SK-N-SH (cell line): ENCODE measurements at regions of chr10 and their contacts with region 1.

Region 1: GRCh38 chr10:61896854-61897661 is 4.4 kb upstream of the ARID5B start:
- DNase-seq: peak; percentile 67
- H3K4me3 ChIP-seq: no peak overlapping the region; a peak in 1 of 4 replicates
- H3K27ac ChIP-seq: peak overlapping the region in 1 of 2 experiments; percentile 99; a peak in 2 of 4 replicates
- H3K4me1 ChIP-seq: peaks cover 16 to 21% of the 10 kb centered on the region in 2 experiments; a peak in 3 of 4 replicates
- H3K27me3 ChIP-seq: no peaks in the 10 kb centered on the region
- CTCF ChIP-seq: peak; percentile 62
- EP300 ChIP-seq: no peak
- RAD21 ChIP-seq: peak; percentile 54

Region 2: GRCh38 chr10:61271127-61271823 is 625.8 kb before region 1 on chr10:
- CTCF ChIA-PET with region 1: no interaction called
- POLR2A ChIA-PET with region 1: no interaction called
- DNase-seq: no peak
- H3K4me3 ChIP-seq: no peak overlapping the region
- H3K27ac ChIP-seq: no peak overlapping the region; a peak in 1 of 4 replicates
- H3K4me1 ChIP-seq: no peaks in the 10 kb centered on the region; a peak in 1 of 4 replicates
- H3K27me3 ChIP-seq: no peaks in the 10 kb centered on the region
- CTCF ChIP-seq: peak; percentile 30; the same call in 1 of the 2 replicates
- EP300 ChIP-seq: no peak
- RAD21 ChIP-seq: peak; percentile 24; the same call in 1 of the 2 replicates

Region 3: DNA sequence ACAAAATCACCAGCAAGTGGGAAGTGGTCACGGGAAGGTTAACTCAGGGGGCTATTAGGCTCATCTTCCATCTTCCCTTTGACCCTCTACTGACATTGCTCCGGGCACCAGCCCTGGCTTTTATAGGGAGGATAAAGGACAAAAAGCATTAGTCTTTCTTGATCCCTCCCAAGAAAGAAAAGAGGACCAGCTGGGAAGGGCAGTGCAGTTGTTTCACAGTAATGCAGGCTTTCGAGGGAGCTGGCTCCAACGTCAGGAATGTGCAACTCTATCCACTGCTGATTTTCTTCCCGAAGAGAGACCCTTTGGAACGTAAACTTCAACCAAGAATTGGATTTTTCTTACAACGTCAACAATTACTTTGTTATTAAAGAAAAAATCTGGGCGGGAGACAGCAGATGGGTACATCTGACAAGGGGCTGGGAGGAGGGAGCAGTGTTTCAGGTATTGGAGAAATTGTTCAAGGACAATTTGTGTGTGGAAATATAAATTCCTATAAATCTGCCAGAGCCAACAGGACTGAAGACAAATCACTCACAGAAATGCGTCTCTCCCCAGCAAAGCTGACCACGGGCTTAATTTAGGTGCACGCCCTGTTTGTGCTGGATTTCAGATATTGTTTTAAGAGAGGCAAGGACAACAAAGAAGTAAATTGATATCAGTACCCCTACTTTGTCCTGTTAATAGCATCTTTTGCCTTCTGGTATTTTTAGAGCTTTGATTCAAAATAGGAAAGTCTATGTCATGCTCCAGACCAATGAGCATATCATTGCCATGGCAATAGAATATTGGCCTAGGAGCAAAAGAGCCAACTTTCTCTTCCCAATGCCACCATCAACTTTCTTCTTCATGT is 18.9 kb before region 1 on chr10:
- CTCF ChIA-PET with region 1: interaction called, 13 read pairs
- POLR2A ChIA-PET with region 1: no interaction called
- DNase-seq: no peak
- H3K4me3 ChIP-seq: no peak overlapping the region
- H3K27ac ChIP-seq: no peak overlapping the region
- H3K4me1 ChIP-seq: peaks cover 0 to 9% of the 10 kb centered on the region in 2 experiments; a peak in 3 of 4 replicates
- H3K27me3 ChIP-seq: no peaks in the 10 kb centered on the region
- CTCF ChIP-seq: no peak
- EP300 ChIP-seq: no peak
- RAD21 ChIP-seq: no peak

Region 4: DNA sequence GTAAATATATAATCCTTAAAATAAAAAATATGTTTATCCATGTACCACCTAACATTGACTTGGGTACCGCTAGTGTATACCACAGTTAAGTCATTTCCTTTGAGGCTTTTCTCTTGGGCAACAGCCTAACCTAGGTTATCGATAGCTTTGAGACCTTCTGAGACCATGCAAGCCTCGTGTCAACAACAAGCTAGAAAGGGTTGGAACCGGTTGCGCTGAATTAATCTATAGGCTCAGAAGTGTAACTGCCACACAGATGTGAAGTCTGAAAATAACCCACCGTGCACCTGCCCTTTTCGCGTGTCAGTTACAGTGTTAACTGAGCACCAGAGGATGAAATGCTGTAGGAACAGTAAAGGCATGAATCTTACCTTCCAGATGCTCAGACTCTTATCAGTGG is 64.2 kb after region 1 on chr10:
- CTCF ChIA-PET with region 1: no interaction called
- POLR2A ChIA-PET with region 1: no interaction called
- DNase-seq: no peak
- H3K4me3 ChIP-seq: no peak overlapping the region
- H3K27ac ChIP-seq: no peak overlapping the region
- H3K4me1 ChIP-seq: peaks cover 8 to 9% of the 10 kb centered on the region in 2 experiments; a peak in 3 of 4 replicates
- H3K27me3 ChIP-seq: no peaks in the 10 kb centered on the region
- CTCF ChIP-seq: no peak
- EP300 ChIP-seq: no peak
- RAD21 ChIP-seq: no peak